CD4-positive, alpha-beta T cell (primary cell): ENCODE measurements at regions of chr1 and their contacts with region 1.

Region 1: DNA sequence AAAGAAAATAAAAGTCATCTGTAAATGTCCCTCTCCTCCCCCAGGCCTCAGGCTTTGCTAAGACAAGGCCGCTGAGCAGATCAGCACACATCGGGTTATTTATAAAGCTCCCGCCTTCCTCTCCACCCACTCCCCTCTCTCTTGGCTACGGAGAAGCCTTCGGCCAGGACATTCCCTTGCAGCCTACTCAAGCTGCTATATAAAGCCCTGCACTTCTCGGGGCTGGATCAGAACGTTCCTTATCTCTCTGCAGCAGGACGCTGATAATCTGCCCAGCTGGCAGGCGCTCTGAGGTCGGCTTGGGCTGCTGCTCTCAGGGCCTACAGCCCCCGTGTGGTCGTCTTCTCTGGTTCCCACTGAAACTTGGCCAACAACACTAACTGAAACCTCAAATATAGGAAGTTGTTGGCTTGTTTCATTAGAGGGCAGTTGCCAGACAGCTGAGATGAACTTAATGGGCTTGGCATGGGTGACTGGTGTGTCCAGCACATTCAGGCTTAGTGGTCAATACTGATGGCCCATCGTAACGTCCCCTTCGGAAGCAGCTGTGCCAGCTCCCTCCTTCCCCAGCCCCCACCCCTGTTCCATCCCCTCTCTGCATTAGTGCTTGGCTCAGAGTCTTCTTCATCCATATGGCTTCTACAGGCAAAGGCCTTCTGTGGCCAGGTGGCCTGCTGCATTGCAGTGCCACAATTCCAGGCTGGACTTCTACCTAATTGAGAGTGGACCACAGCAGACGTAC is 64.6 kb downstream of the IER5 start:
- DNase-seq: peak in 2 of 14 experiments; percentile 35 to 44
- ATAC-seq: no peak
- H3K4me3 ChIP-seq: no peak overlapping the region
- H3K4me3 Mint-ChIP-seq: no peak overlapping the region
- H3K27ac ChIP-seq: no peak overlapping the region
- H3K27ac Mint-ChIP-seq: no peak overlapping the region
- H3K4me1 ChIP-seq: peaks cover 54% of the 10 kb centered on the region
- H3K4me1 Mint-ChIP-seq: peaks cover 63% of the 10 kb centered on the region
- H3K27me3 ChIP-seq: no peaks in the 10 kb centered on the region
- H3K27me3 Mint-ChIP-seq: no peaks in the 10 kb centered on the region
- CTCF ChIP-seq: no peak

Region 2: GRCh38 chr1:181189691-181190363 is 36.8 kb after region 1 on chr1:
- CTCF ChIA-PET with region 1: no interaction called
- POLR2A ChIA-PET with region 1: no interaction called
- intact Hi-C with region 1: no loop called
- DNase-seq: peak; percentile 35 to 85 (median 73)
- ATAC-seq: peak; percentile 96
- H3K4me3 ChIP-seq: peak overlapping the region; percentile 20
- H3K4me3 Mint-ChIP-seq: peak overlapping the region; percentile 34
- H3K27ac ChIP-seq: no peak overlapping the region
- H3K27ac Mint-ChIP-seq: no peak overlapping the region
- H3K4me1 ChIP-seq: peaks cover 12% of the 10 kb centered on the region
- H3K4me1 Mint-ChIP-seq: no peaks in the 10 kb centered on the region
- H3K27me3 ChIP-seq: no peaks in the 10 kb centered on the region
- H3K27me3 Mint-ChIP-seq: peaks cover 26% of the 10 kb centered on the region
- CTCF ChIP-seq: peak; percentile 94

Region 3: DNA sequence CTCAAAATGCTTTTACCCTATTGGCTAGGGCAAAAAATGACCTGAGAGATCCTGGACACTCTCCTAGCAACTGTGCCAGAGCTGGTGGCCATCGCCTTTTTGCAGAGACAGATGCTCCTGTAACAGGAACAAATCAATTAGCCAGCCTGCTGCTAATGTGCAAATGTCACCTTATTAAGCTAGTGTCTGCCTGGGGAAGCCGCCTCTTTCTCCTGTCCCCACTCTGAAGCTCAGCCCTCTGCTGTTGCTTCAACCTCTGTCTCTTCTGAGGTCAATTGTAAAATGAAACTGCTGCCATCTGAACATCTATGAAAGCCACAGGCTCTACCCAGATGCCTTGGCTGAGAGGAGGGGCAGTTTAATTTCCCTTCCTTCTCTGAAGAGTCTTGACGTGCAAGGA is 244.8 kb after region 1 on chr1:
- CTCF ChIA-PET with region 1: no interaction called
- POLR2A ChIA-PET with region 1: interaction called, 14 read pairs
- intact Hi-C with region 1: no loop called
- DNase-seq: peak in 10 of 14 experiments; percentile 7 to 75 (median 18)
- ATAC-seq: peak; percentile 17
- H3K4me3 ChIP-seq: no peak overlapping the region
- H3K4me3 Mint-ChIP-seq: peak overlapping the region; percentile 47
- H3K27ac ChIP-seq: peak overlapping the region; percentile 33 to 66
- H3K27ac Mint-ChIP-seq: no peak overlapping the region
- H3K4me1 ChIP-seq: peaks cover 69% of the 10 kb centered on the region
- H3K4me1 Mint-ChIP-seq: peaks cover 51% of the 10 kb centered on the region
- H3K27me3 ChIP-seq: no peaks in the 10 kb centered on the region
- H3K27me3 Mint-ChIP-seq: no peaks in the 10 kb centered on the region
- CTCF ChIP-seq: no peak